Naive thymus-derived CD4-positive, alpha-beta T cell (primary cell): ENCODE measurements at regions of chr18 and their contacts with region 1.

Region 1: GRCh38 chr18:13611601-13612195 is 114.7 kb downstream of the FAM210A start:
- DNase-seq: peak in 3 of 9 donors; percentile 8 to 17 (median 11)
- ATAC-seq: peak; percentile 2
- H3K4me3 ChIP-seq: peak overlapping the region; percentile 36
- H3K4me3 Mint-ChIP-seq: peak overlapping the region; percentile 82 to 97 (median 90)
- H3K27ac ChIP-seq: peak overlapping the region; percentile 61
- H3K27ac Mint-ChIP-seq: peak overlapping the region; percentile 77 to 96 (median 86)
- H3K4me1 ChIP-seq: peaks cover 34 to 49% of the 10 kb centered on the region in 2 donors
- H3K4me1 Mint-ChIP-seq: peaks cover 55 to 82% (median 73%) of the 10 kb centered on the region in 7 donors
- H3K27me3 ChIP-seq: no peaks in the 10 kb centered on the region
- H3K27me3 Mint-ChIP-seq: no peaks in the 10 kb centered on the region

Region 2: DNA sequence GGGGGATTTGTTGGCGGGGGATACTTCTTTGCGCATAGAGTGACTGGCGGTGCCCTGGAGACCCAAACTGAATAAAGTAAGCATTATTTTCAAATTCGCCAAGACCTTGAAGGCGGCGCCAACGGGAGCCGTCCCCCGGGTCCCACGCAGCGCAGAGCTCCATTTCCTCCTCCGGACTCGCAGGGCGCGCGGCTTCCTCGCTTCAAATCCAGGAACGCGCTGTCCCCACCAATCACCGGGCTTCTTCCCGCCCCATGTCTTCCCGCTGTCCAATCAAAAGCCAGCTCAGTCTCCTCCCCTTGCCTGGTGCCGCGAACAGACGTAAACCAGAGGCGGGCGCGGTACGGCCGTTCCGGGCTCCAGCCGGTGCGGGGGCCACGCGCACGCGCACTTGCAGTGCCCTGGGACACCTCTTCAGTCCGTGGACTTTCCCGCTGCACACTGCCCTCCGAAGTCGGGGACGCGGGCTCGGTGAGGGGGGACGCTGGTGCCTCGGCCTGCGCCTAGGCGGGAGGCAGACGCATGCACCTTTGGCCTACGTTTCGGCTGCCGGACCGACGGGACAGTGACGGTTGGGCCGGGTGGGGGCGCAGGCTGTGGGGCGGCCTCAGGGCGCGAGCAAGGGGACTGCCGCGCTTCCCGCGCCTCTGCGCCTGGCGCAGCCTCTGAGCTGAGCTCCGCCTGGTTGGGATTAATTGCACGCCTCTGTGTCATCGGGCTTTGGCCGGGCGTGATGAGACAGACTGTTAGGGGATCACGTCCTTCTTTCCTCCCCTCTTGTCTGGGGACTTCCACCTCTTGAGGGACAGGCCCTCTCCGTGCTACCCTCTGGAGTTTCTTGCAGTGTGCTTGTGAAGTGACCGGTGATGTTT is 620.5 kb before region 1 on chr18 and contains the start of gene CEP192:
- CTCF ChIA-PET with region 1: no interaction called
- POLR2A ChIA-PET with region 1: no interaction called
- intact Hi-C with region 1: loop called in 1 of 2 experiments (anchors 10 kb)
- DNase-seq: peak; percentile 90 to 99 (median 97)
- ATAC-seq: peak; percentile 99
- H3K4me3 ChIP-seq: peak within 1 kb of the TSS; percentile 85
- H3K4me3 Mint-ChIP-seq: peak within 1 kb of the TSS in 9 of 10 donors; percentile 90 to 99 (median 98)
- H3K27ac ChIP-seq: peak within 1 kb of the TSS; percentile 82
- H3K27ac Mint-ChIP-seq: peak within 1 kb of the TSS; percentile 88 to 97 (median 93)
- H3K4me1 ChIP-seq: peaks cover 27 to 29% of the 10 kb centered on the region in 2 donors
- H3K4me1 Mint-ChIP-seq: peaks cover 10 to 29% (median 20%) of the 10 kb centered on the region in 7 donors
- H3K27me3 ChIP-seq: no peaks in the 10 kb centered on the region
- H3K27me3 Mint-ChIP-seq: peaks cover 0 to 1% (median 0%) of the 10 kb centered on the region in 5 donors
- total RNA-seq, gene CEP192: 30.9 to 45.0 (median 39.7) TPM

Region 3: DNA sequence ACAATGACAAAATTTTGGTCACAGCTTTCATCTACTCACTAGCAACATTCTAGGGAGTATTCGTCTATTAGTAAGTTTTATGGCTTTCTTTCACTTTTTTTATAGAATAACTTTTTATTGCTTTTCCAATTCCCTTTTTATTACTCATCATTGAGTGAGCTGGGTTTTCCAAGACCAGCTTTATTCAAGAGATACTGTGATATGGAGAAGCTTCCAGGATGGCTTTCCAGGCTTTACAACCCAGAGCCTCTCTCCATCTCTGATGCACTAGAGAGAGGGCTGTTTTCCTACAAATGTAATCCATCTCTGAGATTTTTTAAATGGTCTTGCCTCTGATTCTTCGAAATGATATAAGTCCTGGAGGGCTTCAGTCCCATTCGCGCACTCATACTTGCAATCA is 274.9 kb before region 1 on chr18:
- CTCF ChIA-PET with region 1: no interaction called
- POLR2A ChIA-PET with region 1: no interaction called
- intact Hi-C with region 1: no loop called
- DNase-seq: no peak
- ATAC-seq: no peak
- H3K4me3 ChIP-seq: no peak overlapping the region
- H3K4me3 Mint-ChIP-seq: peak overlapping the region in 2 of 10 donors; percentile 3 to 61
- H3K27ac ChIP-seq: no peak overlapping the region
- H3K27ac Mint-ChIP-seq: peak overlapping the region in 3 of 9 donors; percentile 4 to 46 (median 31)
- H3K4me1 ChIP-seq: no peaks in the 10 kb centered on the region
- H3K4me1 Mint-ChIP-seq: peaks cover 3 to 39% (median 29%) of the 10 kb centered on the region in 7 donors
- H3K27me3 ChIP-seq: no peaks in the 10 kb centered on the region
- H3K27me3 Mint-ChIP-seq: peaks cover 0 to 13% (median 0%) of the 10 kb centered on the region in 5 donors

Region 4: GRCh38 chr18:13381944-13382365 is 229.7 kb before region 1 on chr18:
- CTCF ChIA-PET with region 1: no interaction called
- POLR2A ChIA-PET with region 1: no interaction called
- intact Hi-C with region 1: loop called in 1 of 2 experiments (anchors 1 kb)
- DNase-seq: peak in 7 of 9 donors; percentile 51 to 67 (median 62)
- ATAC-seq: peak; percentile 67
- H3K4me3 ChIP-seq: peak overlapping the region; percentile 57
- H3K4me3 Mint-ChIP-seq: peak overlapping the region; percentile 83 to 94 (median 92)
- H3K27ac ChIP-seq: peak overlapping the region; percentile 93
- H3K27ac Mint-ChIP-seq: peak overlapping the region; percentile 97 to 100 (median 99)
- H3K4me1 ChIP-seq: peaks cover 18 to 54% of the 10 kb centered on the region in 2 donors
- H3K4me1 Mint-ChIP-seq: peaks cover 41 to 83% (median 79%) of the 10 kb centered on the region in 7 donors
- H3K27me3 ChIP-seq: no peaks in the 10 kb centered on the region
- H3K27me3 Mint-ChIP-seq: no peaks in the 10 kb centered on the region

Region 5: GRCh38 chr18:13539050-13539449 is 72.6 kb before region 1 on chr18:
- CTCF ChIA-PET with region 1: no interaction called
- POLR2A ChIA-PET with region 1: interaction called, 3 read pairs
- intact Hi-C with region 1: loop called in 1 of 2 experiments (anchors 5 kb)
- DNase-seq: peak in 7 of 9 donors; percentile 68 to 86 (median 79)
- ATAC-seq: peak; percentile 92
- H3K4me3 ChIP-seq: no peak overlapping the region
- H3K4me3 Mint-ChIP-seq: peak overlapping the region; percentile 70 to 85 (median 74)
- H3K27ac ChIP-seq: peak overlapping the region; percentile 66
- H3K27ac Mint-ChIP-seq: peak overlapping the region; percentile 64 to 97 (median 90)
- H3K4me1 ChIP-seq: peaks cover 11 to 36% of the 10 kb centered on the region in 2 donors
- H3K4me1 Mint-ChIP-seq: peaks cover 28 to 80% (median 70%) of the 10 kb centered on the region in 7 donors
- H3K27me3 ChIP-seq: no peaks in the 10 kb centered on the region
- H3K27me3 Mint-ChIP-seq: no peaks in the 10 kb centered on the region

Region 6: DNA sequence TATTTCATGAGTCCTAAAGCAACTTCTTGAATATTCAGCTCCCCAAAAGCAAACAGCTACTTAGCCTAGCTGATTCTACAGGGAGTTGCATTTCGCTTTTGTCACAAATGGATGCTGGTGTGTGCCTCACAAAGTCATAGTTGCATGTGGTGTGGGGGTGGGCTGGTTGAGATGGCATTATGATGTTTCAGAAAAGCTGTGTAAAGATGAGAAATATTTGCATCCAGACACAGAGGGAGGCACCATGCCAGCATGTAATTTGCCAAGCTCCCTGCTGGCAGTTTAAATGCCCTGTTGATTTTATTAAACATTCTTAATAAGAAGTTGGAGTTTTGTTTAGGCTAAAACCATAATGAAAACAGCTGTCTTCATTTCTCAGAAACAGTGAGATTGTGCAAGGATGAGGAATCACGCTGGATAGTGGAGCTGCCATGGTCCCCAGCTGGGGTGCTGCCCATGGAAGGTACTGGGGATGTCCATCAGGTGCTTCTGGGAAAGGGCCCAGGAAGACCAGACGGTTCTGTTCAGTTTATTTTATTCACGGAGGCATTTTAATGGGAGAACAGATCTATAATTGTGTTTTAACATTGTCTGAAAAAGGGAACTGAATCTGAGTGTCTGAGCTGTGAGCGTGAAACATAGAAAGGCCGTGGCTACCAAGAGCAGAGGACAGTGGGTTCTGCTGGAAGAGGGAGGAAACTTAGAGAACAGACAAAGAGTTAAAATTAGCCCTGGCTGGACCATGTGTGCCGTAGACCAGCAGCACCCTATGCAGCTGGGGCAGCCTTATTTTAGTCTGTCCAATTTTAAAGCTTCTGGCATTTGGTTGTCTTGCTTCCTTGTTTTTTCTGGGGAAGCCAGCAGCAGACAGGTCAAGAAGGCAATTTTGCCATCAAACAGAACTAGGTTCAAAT is 62.5 kb before region 1 on chr18:
- CTCF ChIA-PET with region 1: no interaction called
- POLR2A ChIA-PET with region 1: no interaction called
- intact Hi-C with region 1: no loop called
- DNase-seq: no peak
- ATAC-seq: no peak
- H3K4me3 ChIP-seq: no peak overlapping the region
- H3K4me3 Mint-ChIP-seq: no peak overlapping the region
- H3K27ac ChIP-seq: no peak overlapping the region
- H3K27ac Mint-ChIP-seq: peak overlapping the region in 5 of 9 donors; percentile 38 to 81 (median 69)
- H3K4me1 ChIP-seq: no peaks in the 10 kb centered on the region
- H3K4me1 Mint-ChIP-seq: peaks cover 0 to 34% (median 20%) of the 10 kb centered on the region in 7 donors
- H3K27me3 ChIP-seq: no peaks in the 10 kb centered on the region
- H3K27me3 Mint-ChIP-seq: no peaks in the 10 kb centered on the region

Region 7: DNA sequence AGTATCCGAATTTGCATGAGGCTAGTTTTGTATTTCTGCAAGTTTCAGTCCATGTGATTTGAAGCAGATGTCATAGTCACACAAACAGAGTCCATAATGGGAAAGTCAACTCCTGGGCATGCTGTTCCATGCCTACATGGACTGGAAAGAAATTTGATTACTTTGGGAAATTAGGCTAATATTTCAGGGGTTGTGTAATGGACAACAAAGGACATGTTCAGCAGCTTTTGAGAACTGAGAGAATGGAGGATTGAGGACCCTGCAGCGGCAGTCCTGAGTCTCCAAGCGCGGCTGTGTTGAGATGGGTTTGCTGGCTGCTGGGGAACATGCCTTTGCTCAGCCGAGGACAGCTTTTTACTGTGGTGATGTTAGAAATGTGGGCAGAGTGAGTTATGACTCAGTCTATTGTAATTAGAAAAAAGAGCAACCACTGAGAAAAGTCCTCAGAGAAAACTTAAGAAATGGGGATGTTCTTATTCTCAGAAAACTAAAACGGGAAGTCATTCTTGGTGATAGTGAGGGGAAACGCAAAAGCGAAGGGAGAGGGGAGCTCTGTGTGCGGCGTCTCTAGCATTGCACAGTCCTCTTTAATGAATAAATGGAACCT is 34.5 kb before region 1 on chr18:
- CTCF ChIA-PET with region 1: no interaction called
- POLR2A ChIA-PET with region 1: no interaction called
- intact Hi-C with region 1: loop called (anchors 1 to 5 kb)
- DNase-seq: no peak
- ATAC-seq: peak; percentile 80
- H3K4me3 ChIP-seq: no peak overlapping the region
- H3K4me3 Mint-ChIP-seq: peak overlapping the region; percentile 34 to 76 (median 59)
- H3K27ac ChIP-seq: no peak overlapping the region
- H3K27ac Mint-ChIP-seq: peak overlapping the region; percentile 7 to 90 (median 52)
- H3K4me1 ChIP-seq: peaks cover 5 to 13% of the 10 kb centered on the region in 2 donors
- H3K4me1 Mint-ChIP-seq: peaks cover 36 to 60% (median 55%) of the 10 kb centered on the region in 7 donors
- H3K27me3 ChIP-seq: no peaks in the 10 kb centered on the region
- H3K27me3 Mint-ChIP-seq: no peaks in the 10 kb centered on the region

Region 8: DNA sequence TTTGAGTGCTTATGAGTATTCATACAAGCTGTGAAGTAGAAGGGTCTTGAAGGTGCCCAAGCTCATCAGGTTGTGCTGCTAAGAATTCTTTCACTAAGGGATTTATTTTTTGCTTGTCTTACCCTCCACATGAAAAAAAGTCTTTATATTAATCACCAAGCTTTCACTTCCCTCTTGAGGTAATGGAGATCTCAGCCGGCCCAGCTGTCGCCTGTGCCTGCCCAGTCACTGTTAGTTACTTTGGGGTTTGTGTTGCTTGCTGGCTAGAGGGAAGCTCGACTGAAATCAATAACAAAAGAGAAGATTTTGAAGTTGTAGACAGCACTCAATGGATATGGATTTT is 281.7 kb after region 1 on chr18:
- CTCF ChIA-PET with region 1: no interaction called
- POLR2A ChIA-PET with region 1: no interaction called
- intact Hi-C with region 1: no loop called
- DNase-seq: no peak
- ATAC-seq: no peak
- H3K4me3 ChIP-seq: no peak overlapping the region
- H3K4me3 Mint-ChIP-seq: no peak overlapping the region
- H3K27ac ChIP-seq: no peak overlapping the region
- H3K27ac Mint-ChIP-seq: no peak overlapping the region
- H3K4me1 ChIP-seq: no peaks in the 10 kb centered on the region
- H3K4me1 Mint-ChIP-seq: no peaks in the 10 kb centered on the region
- H3K27me3 ChIP-seq: no peaks in the 10 kb centered on the region
- H3K27me3 Mint-ChIP-seq: peaks cover 11 to 55% (median 52%) of the 10 kb centered on the region in 5 donors